A549 (cell line): ENCODE measurements at regions of chr22 and their contacts with region 1.

Region 1: DNA sequence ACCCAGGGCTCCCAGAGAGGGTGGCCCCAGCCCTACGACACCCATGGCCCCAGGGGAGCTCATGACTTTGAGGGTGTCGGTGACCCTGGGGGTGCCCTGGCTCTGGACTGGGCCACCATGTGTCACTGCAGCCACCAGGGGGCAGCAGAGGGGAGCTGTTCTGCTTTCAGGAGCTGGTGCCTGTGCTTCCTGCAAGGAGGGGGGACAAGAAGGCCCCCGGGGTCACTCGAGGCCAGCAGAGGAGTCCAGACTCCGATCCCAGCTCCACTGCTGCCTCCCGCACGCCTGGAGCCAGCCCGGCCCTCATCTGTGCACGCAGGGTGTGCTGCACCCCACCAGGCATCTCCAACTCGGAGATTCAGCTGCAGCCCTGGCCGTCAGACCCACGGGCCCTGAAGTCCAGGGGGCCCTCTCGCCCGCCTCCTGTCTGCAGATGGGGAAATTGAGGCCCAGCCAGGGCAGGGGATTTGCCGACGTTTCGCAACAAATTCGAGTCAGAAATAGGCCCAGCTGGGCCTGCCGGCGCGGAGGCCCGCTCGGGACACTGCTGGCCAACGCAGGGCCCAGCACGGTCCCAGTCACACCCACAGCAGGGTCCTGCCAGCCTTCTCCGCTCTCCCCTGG is 29.5 kb upstream of the WNT7B start:
- DNase-seq: peak; percentile 80 to 85
- ATAC-seq: peak; percentile 71 to 89
- H3K4me3 ChIP-seq: peak overlapping the region; percentile 35
- H3K27ac ChIP-seq: peak overlapping the region; percentile 94 to 99
- H3K4me1 ChIP-seq: peaks cover 31% of the 10 kb centered on the region
- CTCF ChIP-seq: peak; percentile 79
- EP300 ChIP-seq: no peak
- POLR2A ChIP-seq: no peak
- RAD21 ChIP-seq: peak; percentile 79 to 80

Region 2: DNA sequence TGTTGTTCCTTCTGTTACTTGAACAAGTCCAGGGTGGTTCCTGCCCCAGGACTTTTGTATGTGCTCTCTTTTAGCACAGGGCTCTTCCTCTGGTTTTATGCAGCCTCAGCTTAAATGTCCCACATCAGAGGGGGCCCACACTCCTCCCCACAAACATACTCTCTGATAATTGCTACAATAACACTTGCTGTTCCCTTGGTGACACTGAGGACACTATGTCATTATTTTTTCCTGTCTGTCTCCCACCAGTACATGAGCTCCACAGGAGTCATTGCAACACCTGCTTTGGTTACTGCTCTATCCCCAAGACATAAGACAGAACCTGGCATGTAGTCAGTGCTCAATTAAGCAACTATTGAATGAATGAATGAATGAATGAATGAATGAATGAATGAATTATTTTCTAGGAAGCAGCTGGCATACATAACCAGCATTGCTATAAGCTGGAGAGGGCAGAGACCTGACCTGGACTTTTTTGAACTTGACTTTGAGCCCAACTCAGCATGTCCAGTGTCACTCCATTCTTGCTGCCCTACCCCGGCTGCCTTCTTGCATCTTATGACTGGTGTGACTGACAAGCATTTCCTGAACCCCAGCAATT is 22.1 kb before region 1 on chr22:
- CTCF ChIA-PET with region 1: interaction called, 11 read pairs
- POLR2A ChIA-PET with region 1: no interaction called
- DNase-seq: no peak
- ATAC-seq: no peak
- H3K4me3 ChIP-seq: no peak overlapping the region
- H3K27ac ChIP-seq: no peak overlapping the region
- H3K4me1 ChIP-seq: no peaks in the 10 kb centered on the region
- CTCF ChIP-seq: no peak
- EP300 ChIP-seq: no peak
- POLR2A ChIP-seq: no peak
- RAD21 ChIP-seq: no peak

Region 3: DNA sequence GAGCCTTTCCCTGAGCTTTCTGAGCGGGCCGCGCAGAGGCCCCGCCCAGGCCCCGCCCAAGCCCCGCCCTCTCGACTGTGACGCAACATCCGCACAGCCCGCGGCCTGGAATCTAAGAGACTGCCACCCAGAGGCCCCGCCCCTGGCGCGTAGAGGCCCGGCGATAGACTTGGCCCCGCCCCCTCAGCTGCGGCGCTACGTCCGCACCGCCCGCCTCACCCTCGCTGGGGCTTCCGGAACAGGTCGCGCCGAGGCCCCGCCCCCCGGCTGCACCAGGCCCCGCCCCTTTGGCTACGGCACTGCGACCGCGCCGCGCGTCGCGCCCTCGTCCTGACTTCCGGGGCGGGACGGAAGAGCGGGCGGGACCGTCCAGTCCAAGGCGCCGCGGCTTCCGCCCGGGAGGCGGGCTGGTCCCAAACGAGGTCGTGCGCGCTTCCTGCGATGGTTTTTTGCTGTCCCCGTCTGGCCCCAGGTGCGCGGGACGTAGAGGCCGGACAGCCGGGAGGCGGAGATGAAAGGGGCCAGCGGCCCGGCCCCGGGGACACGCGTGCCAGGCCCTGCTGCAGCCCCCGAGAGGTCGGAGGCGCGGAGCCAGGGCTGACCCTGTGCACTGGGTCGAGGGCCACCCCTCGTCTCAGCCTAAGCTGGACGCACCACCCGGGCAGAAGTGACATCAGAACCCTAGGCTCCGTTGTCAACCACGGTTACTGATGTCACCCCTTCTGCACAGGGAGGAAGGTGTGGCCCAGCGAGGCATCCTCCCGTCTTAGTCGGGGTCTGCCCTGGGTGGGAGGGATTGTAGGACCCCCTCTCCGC is 29.5 kb after region 1 on chr22:
- CTCF ChIA-PET with region 1: interaction called, 66 read pairs
- POLR2A ChIA-PET with region 1: interaction called, 7 read pairs
- DNase-seq: peak; percentile 87 to 98
- ATAC-seq: peak; percentile 90 to 94
- H3K4me3 ChIP-seq: peak overlapping the region; percentile 82
- H3K27ac ChIP-seq: peak overlapping the region; percentile 92 to 95
- H3K4me1 ChIP-seq: peaks cover 15% of the 10 kb centered on the region
- CTCF ChIP-seq: no peak
- EP300 ChIP-seq: no peak
- POLR2A ChIP-seq: peak; percentile 68
- RAD21 ChIP-seq: no peak

Region 4: GRCh38 chr22:46054091-46055073 is 47.9 kb after region 1 on chr22:
- CTCF ChIA-PET with region 1: interaction called, 48 read pairs
- POLR2A ChIA-PET with region 1: no interaction called
- DNase-seq: no peak
- ATAC-seq: peak; percentile 58 to 71; a peak in 5 of 6 replicates
- H3K4me3 ChIP-seq: peak overlapping the region; percentile 61
- H3K27ac ChIP-seq: peak overlapping the region; percentile 99
- H3K4me1 ChIP-seq: peaks cover 43% of the 10 kb centered on the region
- CTCF ChIP-seq: no peak
- EP300 ChIP-seq: no peak
- POLR2A ChIP-seq: no peak
- RAD21 ChIP-seq: no peak

Region 5: GRCh38 chr22:46087336-46088277 is 81.1 kb after region 1 on chr22:
- CTCF ChIA-PET with region 1: interaction called, 18 read pairs
- POLR2A ChIA-PET with region 1: no interaction called
- DNase-seq: peak in 1 of 2 experiments; percentile 67
- ATAC-seq: peak; percentile 14 to 46; a peak in 4 of 6 replicates
- H3K4me3 ChIP-seq: peak overlapping the region; percentile 52
- H3K27ac ChIP-seq: peak overlapping the region; percentile 99 to 100
- H3K4me1 ChIP-seq: peaks cover 84% of the 10 kb centered on the region
- CTCF ChIP-seq: no peak
- EP300 ChIP-seq: no peak
- POLR2A ChIP-seq: no peak
- RAD21 ChIP-seq: no peak

Region 6: DNA sequence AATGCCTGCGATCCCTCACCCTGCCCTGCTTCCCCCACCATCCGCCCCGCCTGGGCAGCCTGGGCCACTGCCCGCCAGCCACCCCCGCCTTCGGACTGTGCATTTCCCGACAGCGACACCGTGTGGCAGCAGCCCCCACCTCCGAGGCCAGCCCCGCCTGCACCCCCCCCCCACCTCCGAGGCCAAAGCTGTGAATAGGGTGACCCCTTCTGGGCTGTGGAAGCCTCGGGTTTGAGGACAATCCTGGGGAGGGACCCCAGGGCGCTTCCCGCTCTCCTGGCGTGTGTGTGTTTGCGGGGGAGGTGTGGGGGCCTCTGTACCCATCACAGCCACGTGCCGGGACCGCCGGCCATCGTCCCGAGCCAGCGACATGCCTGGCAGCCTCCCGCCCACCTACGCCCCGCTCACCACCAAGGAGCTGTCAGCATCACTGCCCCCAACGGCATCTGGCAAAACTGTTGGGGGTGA is 110.0 kb after region 1 on chr22:
- CTCF ChIA-PET with region 1: interaction called, 133 read pairs
- POLR2A ChIA-PET with region 1: no interaction called
- DNase-seq: peak; percentile 80 to 85
- ATAC-seq: peak; percentile 46 to 77
- H3K4me3 ChIP-seq: no peak overlapping the region
- H3K27ac ChIP-seq: peak overlapping the region; percentile 60 to 62; a peak in 5 of 6 replicates
- H3K4me1 ChIP-seq: peaks cover 53% of the 10 kb centered on the region
- CTCF ChIP-seq: peak; percentile 78
- EP300 ChIP-seq: no peak
- POLR2A ChIP-seq: no peak
- RAD21 ChIP-seq: peak; percentile 80 to 89

Region 7: GRCh38 chr22:46317646-46318045 is 311.2 kb after region 1 on chr22:
- CTCF ChIA-PET with region 1: interaction called, 21 read pairs
- POLR2A ChIA-PET with region 1: no interaction called
- DNase-seq: no peak
- ATAC-seq: no peak
- H3K4me3 ChIP-seq: no peak overlapping the region
- H3K27ac ChIP-seq: no peak overlapping the region
- H3K4me1 ChIP-seq: no peaks in the 10 kb centered on the region
- CTCF ChIP-seq: no peak
- EP300 ChIP-seq: no peak
- POLR2A ChIP-seq: no peak
- RAD21 ChIP-seq: no peak